Activated T-helper 2 cell treated with anti-CD3 and anti-CD28 coated beads, Interferon-gamma antibody, Interleukin-2, Interleukin-4, amounts not matched to agents 10 μg/mL and 5 μg/mL and 100 μg/mL, durations not matched to agents 14 hours and 24 hours and 36 hours (primary cell): ENCODE measurements at regions of chr18 and their contacts with region 1.

Region 1: GRCh38 chr18:681985-682384 is 24.5 kb downstream of the TYMS start:
- DNase-seq: peak; percentile 72
- H3K4me3 Mint-ChIP-seq: peak overlapping the region; percentile 9
- H3K27ac Mint-ChIP-seq: peak overlapping the region; percentile 90
- H3K4me1 Mint-ChIP-seq: peaks cover 29% of the 10 kb centered on the region
- H3K27me3 Mint-ChIP-seq: no peaks in the 10 kb centered on the region

Region 2: GRCh38 chr18:629269-630150 is 52.5 kb before region 1 on chr18:
- intact Hi-C with region 1: no loop called
- DNase-seq: no peak
- H3K4me3 Mint-ChIP-seq: no peak overlapping the region
- H3K27ac Mint-ChIP-seq: no peak overlapping the region
- H3K4me1 Mint-ChIP-seq: peaks cover 5% of the 10 kb centered on the region
- H3K27me3 Mint-ChIP-seq: peaks cover 21% of the 10 kb centered on the region

Region 3: DNA sequence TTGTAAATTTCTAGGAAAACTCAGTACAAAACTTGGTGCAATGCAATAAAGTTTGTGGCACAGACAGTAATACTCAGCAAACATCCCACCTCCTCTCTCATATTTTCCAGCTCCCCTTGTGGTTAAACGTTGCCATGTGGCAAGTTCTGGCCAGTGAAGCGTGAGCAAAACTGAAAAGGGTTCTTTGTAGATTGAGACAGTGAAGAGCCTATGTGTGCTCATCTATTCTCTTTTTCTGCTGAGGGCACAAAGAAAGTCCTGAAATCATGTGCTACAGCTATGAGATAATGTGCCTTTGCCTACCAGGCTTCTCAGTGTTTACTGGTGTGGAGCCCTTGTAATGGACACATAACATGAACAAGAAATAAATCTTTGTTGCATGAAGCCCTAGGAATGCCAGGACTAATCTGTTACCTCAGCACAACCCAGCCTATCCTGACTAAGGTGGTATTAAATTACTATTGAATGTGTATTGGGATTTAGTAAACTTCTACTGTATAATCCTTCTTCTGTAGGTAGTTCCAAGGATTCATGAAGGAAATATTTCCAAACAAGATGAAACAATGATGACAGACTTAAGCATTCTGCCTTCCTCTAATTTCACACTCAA is 37.5 kb before region 1 on chr18:
- intact Hi-C with region 1: loop called (anchors 2 kb)
- DNase-seq: no peak
- H3K4me3 Mint-ChIP-seq: no peak overlapping the region
- H3K27ac Mint-ChIP-seq: no peak overlapping the region
- H3K4me1 Mint-ChIP-seq: peaks cover 4% of the 10 kb centered on the region
- H3K27me3 Mint-ChIP-seq: no peaks in the 10 kb centered on the region

Region 4: DNA sequence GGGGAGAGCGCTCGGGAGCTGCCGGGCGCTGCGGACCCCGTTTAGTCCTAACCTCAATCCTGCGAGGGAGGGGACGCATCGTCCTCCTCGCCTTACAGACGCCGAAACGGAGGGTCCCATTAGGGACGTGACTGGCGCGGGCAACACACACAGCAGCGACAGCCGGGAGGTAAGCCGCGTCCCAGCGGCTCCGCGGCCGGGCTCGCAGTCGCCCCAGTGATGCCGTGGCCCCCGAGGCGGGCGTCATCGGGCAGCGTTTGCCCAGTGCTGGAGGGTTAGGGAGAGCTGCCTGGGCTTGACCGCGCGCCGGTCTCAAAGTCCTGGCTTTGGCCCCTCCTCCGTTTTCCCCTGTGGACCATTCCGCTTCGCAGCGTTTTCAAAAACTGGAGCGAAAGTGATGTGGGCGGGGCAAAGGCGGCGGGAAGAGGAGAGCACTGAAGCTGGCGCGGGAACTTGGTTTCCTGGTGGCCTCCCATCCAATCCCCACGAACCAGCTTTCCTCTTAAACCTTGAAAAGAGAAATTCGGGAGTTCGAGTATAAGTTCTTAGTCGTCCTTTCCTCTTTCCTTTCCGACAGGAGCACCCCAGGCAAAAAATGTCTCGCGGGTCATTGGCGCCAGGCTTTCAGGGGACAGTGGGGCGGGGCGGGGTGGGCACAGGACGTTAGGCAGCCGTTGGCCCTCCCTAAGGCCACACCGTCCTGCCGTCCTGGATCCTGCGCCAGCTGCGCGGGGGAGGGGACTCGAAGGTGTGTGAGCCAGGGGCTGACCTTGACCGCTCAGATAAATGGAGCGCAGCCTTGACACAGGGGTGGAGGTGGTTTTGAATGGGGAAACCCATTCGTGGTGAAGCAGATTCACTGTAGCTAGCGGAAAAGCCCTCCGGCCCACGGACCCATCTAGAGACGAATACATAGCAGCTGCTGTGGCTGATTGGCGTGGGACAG is 23.7 kb before region 1 on chr18:
- intact Hi-C with region 1: loop called (anchors 1 kb)
- DNase-seq: peak; percentile 75
- H3K4me3 Mint-ChIP-seq: peak overlapping the region; percentile 94
- H3K27ac Mint-ChIP-seq: peak overlapping the region; percentile 94
- H3K4me1 Mint-ChIP-seq: peaks cover 38% of the 10 kb centered on the region
- H3K27me3 Mint-ChIP-seq: no peaks in the 10 kb centered on the region

Region 5: GRCh38 chr18:697800-698199 is 15.8 kb after region 1 on chr18:
- intact Hi-C with region 1: loop called (anchors 2 kb)
- DNase-seq: no peak
- H3K4me3 Mint-ChIP-seq: no peak overlapping the region
- H3K27ac Mint-ChIP-seq: no peak overlapping the region
- H3K4me1 Mint-ChIP-seq: peaks cover 10% of the 10 kb centered on the region
- H3K27me3 Mint-ChIP-seq: no peaks in the 10 kb centered on the region